Head of caudate nucleus (tissue), 42 donors: ENCODE measurements at regions of chr16 and their contacts with region 1.

Region 1: GRCh38 chr16:57300387-57301125 is 16.1 kb upstream of the PLLP start:
- DNase-seq: peak; percentile 96 to 100 (median 99)

Region 2: GRCh38 chr16:57235128-57236021 is 65.2 kb before region 1 on chr16:
- intact Hi-C with region 1: no loop called
- DNase-seq: no peak

Region 3: GRCh38 chr16:57372372-57373116 is 72.0 kb after region 1 on chr16 and contains the start of gene CX3CL1:
- intact Hi-C with region 1: loop called (anchors 5 kb)
- DNase-seq: peak; percentile 46 to 94 (median 80)

Region 4: GRCh38 chr16:57422026-57422944 is 121.7 kb after region 1 on chr16:
- intact Hi-C with region 1: loop called (anchors 1 kb)
- DNase-seq: peak in 20 of 42 donors; percentile 33 to 77 (median 49)

Region 5: GRCh38 chr16:57519796-57520360 is 219.3 kb after region 1 on chr16:
- intact Hi-C with region 1: loop called (anchors 5 kb)
- DNase-seq: peak; percentile 64 to 93 (median 86)